Vagina (tissue), 2 donors: ENCODE measurements at regions of chr1 and their contacts with region 1.

Region 1: DNA sequence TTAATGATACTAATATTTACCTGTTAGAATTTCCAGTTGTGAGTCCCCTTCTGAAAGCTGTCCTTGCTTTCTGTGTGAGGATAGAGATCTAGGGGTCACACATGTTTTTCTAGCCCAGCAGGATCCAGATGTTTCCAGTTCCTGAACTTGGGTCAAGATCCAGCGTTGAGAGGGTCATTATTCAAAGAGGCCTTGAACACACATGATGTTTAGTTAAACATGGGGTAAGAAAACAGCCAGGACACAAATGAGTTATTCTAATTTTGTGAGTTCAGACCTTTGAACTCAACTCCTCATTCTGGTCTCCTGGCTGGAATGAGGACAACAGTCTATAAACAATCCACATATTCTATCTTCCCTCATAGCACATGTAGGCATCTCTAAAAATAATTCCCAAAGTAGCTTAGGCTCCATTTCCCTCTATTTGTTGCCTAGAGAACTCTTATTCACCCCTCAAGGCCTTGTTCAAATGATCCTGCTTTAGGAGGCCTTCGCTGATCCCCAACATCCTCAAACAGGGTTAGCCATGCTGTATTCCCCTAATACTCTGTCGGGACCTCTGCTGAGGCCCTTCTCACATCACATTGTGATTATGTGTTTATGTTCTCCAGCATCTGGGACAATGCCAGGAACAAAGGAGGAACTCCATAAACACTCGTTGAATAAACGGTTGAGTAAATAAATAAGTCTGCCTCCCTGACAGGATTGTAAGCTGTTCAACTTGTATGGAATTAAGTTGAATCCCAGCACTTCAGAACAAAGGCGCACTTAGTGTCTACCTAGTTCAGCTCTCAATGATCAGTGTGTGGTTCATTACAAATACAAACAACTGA is 15.0 kb upstream of the KCNN3 start:
- DNase-seq: no peak
- H3K4me3 ChIP-seq: no peak overlapping the region
- H3K27ac ChIP-seq: peak overlapping the region; percentile 30
- H3K4me1 ChIP-seq: no peaks in the 10 kb centered on the region
- H3K27me3 ChIP-seq: no peaks in the 10 kb centered on the region
- CTCF ChIP-seq: no peak
- POLR2A ChIP-seq: no peak

Region 2: DNA sequence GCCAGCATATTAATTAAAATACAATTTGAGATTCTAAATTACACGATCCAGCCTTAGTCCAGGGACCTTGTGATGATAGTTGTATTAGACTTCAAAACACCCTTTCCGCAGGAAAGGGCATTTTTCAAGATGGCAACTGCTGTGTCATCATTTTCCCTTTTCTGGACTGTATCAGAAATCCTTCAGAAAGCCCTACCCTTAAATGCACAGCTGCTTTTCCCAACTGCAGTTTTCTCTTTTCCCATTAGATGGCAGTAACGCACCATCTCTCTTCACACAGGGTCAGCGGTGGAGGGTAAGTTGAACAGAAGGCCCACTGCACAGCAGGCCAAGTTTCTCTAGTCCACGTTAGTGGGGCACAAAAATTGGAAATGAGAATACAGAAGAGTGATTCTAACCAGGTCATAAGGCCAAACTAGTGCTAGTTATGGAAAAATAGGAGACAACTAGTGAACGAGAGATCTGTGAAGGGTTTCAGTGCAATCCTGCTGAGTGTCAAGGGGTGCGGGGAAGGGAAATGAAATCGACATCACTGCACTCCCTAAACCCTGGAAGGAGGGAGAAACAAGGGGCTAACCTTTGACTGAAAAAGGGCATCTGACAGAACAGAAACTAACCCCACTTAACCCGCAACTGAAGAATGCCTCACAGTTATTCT is 405.2 kb before region 1 on chr1:
- intact Hi-C with region 1: loop called (anchors 5 kb)
- DNase-seq: no peak
- H3K4me3 ChIP-seq: no peak overlapping the region
- H3K27ac ChIP-seq: no peak overlapping the region
- H3K4me1 ChIP-seq: no peaks in the 10 kb centered on the region
- H3K27me3 ChIP-seq: no peaks in the 10 kb centered on the region
- CTCF ChIP-seq: peak; percentile 65 to 95 (median 86)
- POLR2A ChIP-seq: no peak

Region 3: DNA sequence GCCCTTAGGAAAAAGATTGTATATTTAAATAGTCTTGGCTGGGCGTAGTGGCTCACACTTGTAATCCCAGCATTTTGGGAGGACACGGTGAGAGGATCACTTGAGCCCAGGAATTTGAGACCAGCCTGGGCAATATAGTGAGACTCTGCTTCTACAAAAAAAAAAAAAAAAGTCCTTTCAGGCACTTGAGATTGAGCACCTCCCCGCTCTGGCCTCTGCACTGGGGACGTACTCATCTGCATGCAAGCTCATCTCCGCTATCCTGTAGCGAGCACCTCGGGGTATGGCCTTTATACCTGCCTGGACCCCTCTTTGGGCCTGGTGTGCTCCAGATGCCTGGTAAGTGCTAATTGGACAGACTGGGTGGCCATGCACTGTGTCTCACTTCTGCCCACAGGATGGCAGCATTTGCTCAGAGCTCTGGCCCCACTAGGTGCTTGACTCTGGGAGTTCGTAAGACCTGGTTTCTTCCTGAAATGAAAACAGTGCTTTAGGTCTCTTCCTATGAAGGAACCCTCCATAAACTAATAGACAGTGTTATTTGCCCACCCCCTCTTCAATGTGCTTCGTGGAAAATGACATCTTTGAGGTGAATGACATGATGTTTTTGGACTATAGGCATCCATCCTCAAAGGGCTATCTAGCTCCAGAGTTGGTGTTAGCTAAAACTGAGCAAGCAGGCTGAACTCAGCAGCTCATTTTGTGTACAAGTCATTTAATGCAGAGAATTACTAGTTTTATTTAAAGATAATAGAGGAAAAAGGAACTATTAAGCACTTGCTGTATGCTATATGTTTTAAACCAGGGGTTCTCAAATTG is 215.4 kb before region 1 on chr1:
- intact Hi-C with region 1: loop called (anchors 10 kb)
- DNase-seq: no peak
- H3K4me3 ChIP-seq: no peak overlapping the region
- H3K27ac ChIP-seq: no peak overlapping the region
- H3K4me1 ChIP-seq: no peaks in the 10 kb centered on the region
- H3K27me3 ChIP-seq: no peaks in the 10 kb centered on the region
- CTCF ChIP-seq: peak; percentile 56 to 89 (median 61)
- POLR2A ChIP-seq: no peak

Region 4: DNA sequence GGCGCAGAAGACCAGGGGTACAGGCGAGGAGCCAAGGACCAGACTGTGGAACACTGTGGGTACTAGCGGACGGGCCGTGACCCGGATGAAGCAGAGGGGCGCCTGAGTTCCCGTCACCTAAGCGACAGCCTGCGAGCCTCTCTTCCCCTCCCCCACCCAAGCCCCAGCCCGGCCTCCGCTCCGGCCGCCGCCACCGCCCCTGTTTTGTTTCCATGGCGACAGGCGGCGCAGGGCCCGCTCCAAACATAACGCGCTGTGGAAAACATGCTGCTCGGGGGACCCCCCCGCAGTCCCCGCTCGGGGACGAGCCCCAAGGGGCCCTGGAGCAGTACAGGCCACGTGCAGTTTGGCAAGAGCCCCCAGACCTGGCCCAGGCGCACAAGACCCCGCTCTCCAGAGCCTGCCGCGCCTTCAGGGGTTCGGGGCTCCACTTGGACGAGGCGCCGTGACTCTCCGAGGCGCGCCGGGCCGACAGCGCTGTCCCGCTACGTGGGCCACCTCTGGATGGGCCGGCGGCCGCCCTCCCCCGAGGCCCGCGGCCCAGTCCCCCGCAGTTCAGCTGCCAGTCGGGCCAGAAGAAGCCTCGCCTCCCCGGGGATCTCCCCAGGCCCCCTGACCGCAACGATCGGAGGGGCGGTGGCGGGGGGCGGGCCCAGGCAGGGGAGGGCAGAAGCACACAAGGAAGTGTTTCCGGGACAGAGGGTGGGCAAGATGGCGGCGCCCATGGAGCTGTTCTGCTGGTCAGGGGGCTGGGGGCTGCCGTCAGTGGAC is 323.6 kb after region 1 on chr1 and contains the start of gene MTX1:
- intact Hi-C with region 1: no loop called
- DNase-seq: peak in 1 of 2 donors; percentile 95
- H3K4me3 ChIP-seq: peak within 1 kb of the TSS; percentile 78 to 87
- H3K27ac ChIP-seq: peak within 1 kb of the TSS; percentile 99
- H3K4me1 ChIP-seq: peaks cover 38% of the 10 kb centered on the region
- H3K27me3 ChIP-seq: no peaks in the 10 kb centered on the region
- CTCF ChIP-seq: no peak
- POLR2A ChIP-seq: peak in 1 of 2 donors; percentile 9
- total RNA-seq, gene MTX1: 29.5 TPM